ENCODE measurements at regions of chr4 and their contacts with region 1.

Region 1: GRCh38 chr4:185395956-185396723 is 416 bp upstream of the LRP2BP start:
- DNase-seq: peak; percentile 95 to 98 (median 97)
- H3K4me3 ChIP-seq: peak overlapping the region; percentile 91 to 99
- H3K4me3 Mint-ChIP-seq: peak overlapping the region; percentile 88 to 99 (median 95)
- H3K27ac ChIP-seq: peak overlapping the region; percentile 99
- H3K27ac Mint-ChIP-seq: peak overlapping the region; percentile 92 to 100 (median 99)
- H3K4me1 ChIP-seq: peaks cover 18% of the 10 kb centered on the region
- H3K4me1 Mint-ChIP-seq: peaks cover 11 to 24% (median 18%) of the 10 kb centered on the region in 4 donors
- H3K27me3 ChIP-seq: no peaks in the 10 kb centered on the region
- H3K27me3 Mint-ChIP-seq: no peaks in the 10 kb centered on the region

Region 2: DNA sequence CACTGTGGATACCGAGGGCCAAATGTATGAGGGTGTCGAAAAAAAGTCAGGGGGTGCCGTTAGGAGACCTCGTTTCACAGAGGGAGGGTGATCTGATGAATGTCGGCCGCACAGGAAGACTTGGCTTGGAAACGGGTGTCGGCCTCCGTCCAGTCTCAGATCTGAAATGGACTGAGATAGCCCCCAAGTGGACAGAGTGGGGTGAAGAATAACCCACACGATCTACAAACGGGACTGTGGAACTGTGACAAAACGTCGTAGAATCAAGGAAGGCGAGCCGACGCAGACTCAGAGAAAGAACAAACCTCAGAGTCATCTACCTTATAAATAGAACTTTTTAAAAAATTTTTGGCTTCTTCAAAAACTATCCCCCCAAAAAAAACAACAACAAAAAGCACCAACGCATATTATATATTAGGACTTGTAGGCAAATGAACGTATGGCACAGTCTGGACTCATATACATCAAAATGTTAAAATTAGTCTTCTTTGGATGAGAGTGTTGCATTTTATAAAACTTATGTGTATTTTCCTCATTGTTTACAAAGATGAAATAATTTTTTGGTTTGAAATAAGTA is 858.0 kb before region 1 on chr4:
- CTCF ChIA-PET with region 1: no interaction called
- POLR2A ChIA-PET with region 1: interaction called, 4 read pairs
- intact Hi-C with region 1: loop called (anchors 5 kb)
- DNase-seq: peak; percentile 59 to 71 (median 65)
- H3K4me3 ChIP-seq: peak overlapping the region; percentile 82 to 92
- H3K4me3 Mint-ChIP-seq: peak overlapping the region; percentile 91 to 98 (median 94)
- H3K27ac ChIP-seq: peak overlapping the region; percentile 98
- H3K27ac Mint-ChIP-seq: peak overlapping the region; percentile 94 to 100 (median 99)
- H3K4me1 ChIP-seq: peaks cover 37% of the 10 kb centered on the region
- H3K4me1 Mint-ChIP-seq: peaks cover 28 to 51% (median 35%) of the 10 kb centered on the region in 4 donors
- H3K27me3 ChIP-seq: no peaks in the 10 kb centered on the region
- H3K27me3 Mint-ChIP-seq: no peaks in the 10 kb centered on the region

Region 3: GRCh38 chr4:184825896-184826690 is 570.0 kb before region 1 on chr4 and contains the start of gene ACSL1:
- CTCF ChIA-PET with region 1: no interaction called
- POLR2A ChIA-PET with region 1: no interaction called
- intact Hi-C with region 1: loop called (anchors 5 kb)
- DNase-seq: peak; percentile 73 to 80 (median 79)
- H3K4me3 ChIP-seq: peak within 1 kb of the TSS; percentile 24 to 55
- H3K4me3 Mint-ChIP-seq: peak within 1 kb of the TSS; percentile 85 to 97 (median 91)
- H3K27ac ChIP-seq: peak within 1 kb of the TSS; percentile 56
- H3K27ac Mint-ChIP-seq: peak within 1 kb of the TSS; percentile 85 to 97 (median 93)
- H3K4me1 ChIP-seq: peaks cover 24% of the 10 kb centered on the region
- H3K4me1 Mint-ChIP-seq: peaks cover 13 to 45% (median 19%) of the 10 kb centered on the region in 4 donors
- H3K27me3 ChIP-seq: no peaks in the 10 kb centered on the region
- H3K27me3 Mint-ChIP-seq: no peaks in the 10 kb centered on the region
- total RNA-seq, gene ACSL1: 11.5 to 12.9 TPM

Region 4: DNA sequence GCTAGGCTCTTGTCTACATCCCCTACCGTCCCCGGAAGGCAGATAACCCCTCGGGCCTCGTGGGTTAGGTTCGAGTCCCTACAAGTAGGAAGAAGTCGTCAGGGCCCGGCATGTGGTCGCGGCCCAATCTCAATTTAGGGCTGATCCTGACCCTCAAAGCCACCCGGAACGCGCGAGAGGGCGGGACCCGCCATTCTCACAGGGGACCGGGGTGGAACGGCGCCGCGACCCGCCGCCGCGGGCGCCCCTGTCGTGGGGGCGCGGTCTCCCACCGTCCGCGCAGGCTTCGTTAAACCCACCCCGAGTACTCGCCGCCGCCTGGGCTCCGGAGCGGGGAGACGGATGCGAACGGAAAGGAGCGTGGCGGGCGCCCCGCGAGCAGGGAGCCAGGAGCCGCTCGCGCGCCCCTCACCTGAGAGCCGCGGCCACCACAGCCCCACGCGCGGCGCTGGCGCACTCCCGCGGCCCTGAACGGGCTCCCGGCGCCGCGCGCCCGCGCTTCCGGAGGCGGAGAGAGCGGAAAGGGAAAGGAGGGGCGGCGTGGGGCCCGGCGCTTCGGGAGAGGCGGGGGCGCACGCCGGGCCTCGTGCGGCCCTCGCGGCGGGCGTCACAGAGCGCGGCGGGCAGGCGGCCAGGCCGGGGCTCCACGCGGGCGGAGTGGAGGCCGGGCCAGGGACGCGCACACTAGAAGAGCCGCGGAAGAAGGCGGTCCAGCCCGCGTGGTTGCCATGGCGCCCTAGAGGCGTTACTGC is 192.5 kb before region 1 on chr4 and contains the start of gene CFAP97:
- CTCF ChIA-PET with region 1: no interaction called
- POLR2A ChIA-PET with region 1: interaction called, 30 read pairs
- intact Hi-C with region 1: loop called (anchors 1 kb)
- DNase-seq: peak; percentile 88 to 90 (median 90)
- H3K4me3 ChIP-seq: peak within 1 kb of the TSS; percentile 47 to 83
- H3K4me3 Mint-ChIP-seq: peak within 1 kb of the TSS; percentile 91 to 99 (median 96)
- H3K27ac ChIP-seq: peak within 1 kb of the TSS; percentile 82
- H3K27ac Mint-ChIP-seq: peak within 1 kb of the TSS; percentile 98 to 99 (median 99)
- H3K4me1 ChIP-seq: peaks cover 48% of the 10 kb centered on the region
- H3K4me1 Mint-ChIP-seq: peaks cover 31 to 66% (median 48%) of the 10 kb centered on the region in 4 donors
- H3K27me3 ChIP-seq: no peaks in the 10 kb centered on the region
- H3K27me3 Mint-ChIP-seq: no peaks in the 10 kb centered on the region
- total RNA-seq, gene CFAP97: 41.6 to 41.9 TPM

Region 5: DNA sequence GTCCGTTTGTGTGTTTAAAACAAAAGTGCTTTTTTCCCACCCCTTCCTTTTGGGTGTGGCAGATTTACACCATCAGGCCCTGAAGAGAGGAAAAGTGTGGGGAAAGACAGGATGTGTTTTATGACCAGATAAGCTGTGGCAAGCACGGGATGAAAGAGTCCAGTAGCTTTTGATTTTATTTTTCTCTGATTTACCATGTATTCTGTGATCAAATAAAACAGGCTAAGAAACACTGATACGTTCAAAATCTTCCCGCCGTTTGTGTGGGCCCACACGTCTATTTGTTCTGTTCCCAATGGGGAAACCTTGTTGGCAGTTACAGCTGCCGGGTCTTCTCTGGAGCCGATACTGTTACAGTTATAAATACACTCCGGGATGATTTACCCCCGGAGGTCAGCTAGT is 11.2 kb before region 1 on chr4:
- CTCF ChIA-PET with region 1: no interaction called
- POLR2A ChIA-PET with region 1: interaction called, 19 read pairs
- intact Hi-C with region 1: no loop called
- DNase-seq: no peak
- H3K4me3 ChIP-seq: no peak overlapping the region
- H3K4me3 Mint-ChIP-seq: peak overlapping the region in 1 of 8 donors; percentile 8
- H3K27ac ChIP-seq: no peak overlapping the region
- H3K27ac Mint-ChIP-seq: peak overlapping the region in 1 of 7 donors; percentile 4
- H3K4me1 ChIP-seq: peaks cover 4% of the 10 kb centered on the region
- H3K4me1 Mint-ChIP-seq: peaks cover 7 to 14% (median 10%) of the 10 kb centered on the region in 4 donors
- H3K27me3 ChIP-seq: no peaks in the 10 kb centered on the region
- H3K27me3 Mint-ChIP-seq: peaks cover 0 to 1% of the 10 kb centered on the region in 2 donors

Region 6: DNA sequence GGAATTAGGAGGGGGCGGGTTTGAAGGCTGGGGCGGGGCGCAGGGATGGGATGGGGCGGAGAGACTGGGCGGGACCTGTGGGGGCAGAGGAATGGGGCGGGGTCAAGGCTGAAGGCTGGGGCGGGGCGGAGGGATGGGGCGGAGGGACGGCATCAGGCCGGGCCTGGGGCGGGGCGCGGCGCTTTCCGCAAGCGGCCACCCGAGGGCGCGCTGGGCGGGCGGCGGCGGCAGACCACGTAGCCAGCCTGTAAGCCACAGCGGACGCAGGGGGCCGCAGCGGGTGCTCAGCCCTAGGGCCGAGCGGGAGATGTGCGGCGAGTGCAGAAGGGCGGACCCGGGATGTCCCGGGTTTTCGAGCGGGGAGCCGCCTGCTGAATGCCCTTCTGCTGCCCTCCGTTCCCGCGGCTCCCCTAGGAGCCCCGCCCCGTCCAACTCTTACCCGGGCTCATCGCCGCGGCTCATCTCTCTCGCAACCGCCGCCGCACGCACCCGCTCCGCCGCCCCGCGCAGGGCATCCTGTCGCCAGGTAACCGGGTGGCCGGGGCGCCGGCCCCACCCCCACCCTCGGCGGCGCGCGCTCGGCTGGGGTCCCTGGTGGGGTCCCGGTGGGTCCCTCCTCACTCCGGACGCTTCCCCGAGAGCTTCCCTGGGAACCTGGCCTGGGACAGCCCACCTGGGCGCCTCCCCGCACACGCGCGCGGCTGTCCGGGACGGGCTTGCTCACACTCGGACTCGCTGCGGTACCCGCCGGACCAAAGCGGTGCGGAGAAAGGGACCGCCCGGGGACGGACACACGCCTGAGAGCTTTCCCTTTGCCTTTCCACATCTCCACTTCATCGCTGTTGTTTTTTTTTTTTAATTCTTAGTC is 75.3 kb after region 1 on chr4 and contains the start of gene CCDC110:
- CTCF ChIA-PET with region 1: no interaction called
- POLR2A ChIA-PET with region 1: interaction called, 5 read pairs
- intact Hi-C with region 1: loop called (anchors 1 kb)
- DNase-seq: peak; percentile 83 to 90 (median 87)
- H3K4me3 ChIP-seq: peak within 1 kb of the TSS; percentile 72 to 88
- H3K4me3 Mint-ChIP-seq: peak within 1 kb of the TSS; percentile 88 to 94 (median 92)
- H3K27ac ChIP-seq: peak within 1 kb of the TSS; percentile 28
- H3K27ac Mint-ChIP-seq: peak within 1 kb of the TSS; percentile 69 to 93 (median 90)
- H3K4me1 ChIP-seq: peaks cover 16% of the 10 kb centered on the region
- H3K4me1 Mint-ChIP-seq: peaks cover 6 to 17% (median 10%) of the 10 kb centered on the region in 4 donors
- H3K27me3 ChIP-seq: no peaks in the 10 kb centered on the region
- H3K27me3 Mint-ChIP-seq: peaks cover 0 to 2% of the 10 kb centered on the region in 2 donors
- total RNA-seq, gene CCDC110: 0.19 to 0.90 TPM

Measured in CD4-positive, alpha-beta memory T cell (primary cell).